Heart right ventricle (tissue), 16 donors: ENCODE measurements at regions of chr10 and their contacts with region 1.

Region 1: DNA sequence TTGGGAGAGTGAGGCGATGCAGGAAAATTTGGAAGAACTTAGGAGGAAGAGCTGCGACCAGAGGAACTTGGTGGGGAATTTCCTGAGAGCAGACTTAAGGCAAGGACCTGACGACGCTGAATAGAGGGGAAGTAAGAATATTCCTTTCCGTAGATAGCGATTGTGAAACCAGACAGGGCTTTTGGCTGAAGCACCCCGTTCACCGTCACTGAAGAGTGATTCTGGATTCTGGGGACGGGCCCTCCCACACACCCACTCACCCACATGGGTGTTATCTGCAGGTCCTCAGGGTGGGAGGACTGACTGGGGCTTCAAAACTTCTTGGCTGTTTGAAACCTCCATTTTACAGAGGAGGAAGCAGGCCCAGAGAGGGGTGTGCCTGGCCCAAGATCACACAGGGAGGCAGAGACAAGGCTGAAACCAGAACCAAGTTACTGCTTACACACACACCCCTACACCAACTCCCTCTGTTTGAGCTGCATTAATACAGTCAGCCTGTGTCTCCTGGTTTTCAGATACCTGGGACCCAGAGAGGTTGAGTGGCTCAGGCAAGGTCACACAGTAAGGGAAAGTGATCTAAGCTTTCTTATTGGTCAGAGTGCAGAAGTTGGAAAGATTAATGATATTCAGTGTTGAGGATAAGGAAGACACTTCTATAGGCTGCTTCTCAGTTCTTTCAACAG is 37.2 kb upstream of the CDH23 start:
- DNase-seq: peak in 1 of 2 donors; percentile 25
- ATAC-seq: peak; percentile 41 to 71 (median 61)
- H3K4me3 ChIP-seq: no peak overlapping the region
- H3K27ac ChIP-seq: peak overlapping the region in 6 of 10 donors; percentile 14 to 81 (median 44)
- H3K4me1 ChIP-seq: peaks cover 0 to 38% (median 0%) of the 10 kb centered on the region in 9 donors
- H3K27me3 ChIP-seq: no peaks in the 10 kb centered on the region
- CTCF ChIP-seq: no peak

Region 2: DNA sequence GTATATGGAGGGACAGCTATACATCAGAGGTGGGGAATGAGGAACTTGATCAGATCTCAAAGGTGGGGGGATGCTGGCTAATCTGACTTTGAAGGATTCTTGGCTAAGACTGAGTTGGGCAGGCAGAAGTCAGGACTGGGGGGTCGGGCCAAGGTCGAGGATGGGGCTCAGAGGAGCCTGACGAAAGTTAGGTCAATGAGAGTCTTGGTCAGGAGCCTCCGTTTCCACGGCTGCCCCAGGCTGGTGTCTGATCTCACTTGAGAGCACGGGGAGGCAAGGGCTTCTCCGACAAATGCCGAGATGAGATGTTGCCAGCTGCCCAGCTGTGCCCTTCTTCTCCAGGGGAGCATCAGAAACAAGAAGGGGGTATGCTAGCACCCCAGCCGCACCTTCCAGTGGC is 34.8 kb before region 1 on chr10:
- intact Hi-C with region 1: loop called in 1 of 10 experiments (anchors 1 kb)
- DNase-seq: no peak
- ATAC-seq: no peak
- H3K4me3 ChIP-seq: no peak overlapping the region
- H3K27ac ChIP-seq: no peak overlapping the region
- H3K4me1 ChIP-seq: peaks cover 0 to 6% (median 3%) of the 10 kb centered on the region in 9 donors
- H3K27me3 ChIP-seq: no peaks in the 10 kb centered on the region
- CTCF ChIP-seq: no peak

Region 3: GRCh38 chr10:71494980-71495381 is 135.5 kb after region 1 on chr10:
- intact Hi-C with region 1: no loop called
- DNase-seq: no peak
- ATAC-seq: no peak
- H3K4me3 ChIP-seq: no peak overlapping the region
- H3K27ac ChIP-seq: no peak overlapping the region
- H3K4me1 ChIP-seq: peaks cover 0 to 7% (median 0%) of the 10 kb centered on the region in 9 donors
- H3K27me3 ChIP-seq: no peaks in the 10 kb centered on the region
- CTCF ChIP-seq: no peak